MCF 10A (cell line): ENCODE measurements at regions of chr1 and their contacts with region 1.

Region 1: DNA sequence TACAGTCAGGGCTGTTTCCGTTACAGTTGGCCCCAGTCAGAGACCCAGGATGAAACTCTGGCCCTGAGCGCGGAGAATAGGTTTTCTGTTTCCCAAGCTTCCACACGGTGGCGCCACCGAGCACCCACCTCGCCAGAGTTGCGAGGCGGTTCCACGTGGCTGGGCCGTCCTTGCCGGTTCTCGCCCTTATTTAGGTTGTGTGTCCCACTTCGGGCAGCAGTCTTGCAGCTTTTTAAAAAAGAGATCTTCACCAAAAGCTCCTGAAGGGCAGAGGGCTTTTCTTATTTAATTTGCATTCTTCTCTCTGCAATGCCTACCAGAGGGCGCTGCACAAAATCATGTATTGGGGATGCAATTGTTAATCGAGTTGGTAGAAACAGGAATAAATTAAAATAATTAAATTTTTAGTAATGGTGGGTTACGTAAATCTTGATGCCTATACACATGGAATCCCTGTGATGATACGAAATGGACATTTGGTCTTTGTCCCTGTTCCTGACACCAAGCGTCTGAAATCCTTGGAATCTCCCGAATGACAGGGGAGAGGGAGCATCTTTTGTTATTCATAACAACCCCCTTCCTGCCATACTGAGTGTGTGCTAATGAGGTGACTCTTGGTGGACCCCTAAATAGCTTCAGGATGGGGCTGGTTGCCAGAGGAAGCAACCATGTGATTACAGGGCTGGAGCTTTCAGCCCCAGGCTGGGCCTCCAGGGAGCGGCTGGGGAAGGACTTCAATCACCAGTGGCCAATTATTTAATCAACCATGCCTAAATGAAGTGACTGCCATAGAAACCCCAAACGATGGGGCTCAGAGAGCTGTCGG is 5.6 kb upstream of the S100A7 start:
- DNase-seq: peak; percentile 72
- H3K4me3 Mint-ChIP-seq: no peak overlapping the region
- H3K27ac Mint-ChIP-seq: no peak overlapping the region
- H3K4me1 Mint-ChIP-seq: no peaks in the 10 kb centered on the region
- H3K27me3 Mint-ChIP-seq: peaks cover 32% of the 10 kb centered on the region
- CTCF ChIP-seq: peak; percentile 93

Region 2: DNA sequence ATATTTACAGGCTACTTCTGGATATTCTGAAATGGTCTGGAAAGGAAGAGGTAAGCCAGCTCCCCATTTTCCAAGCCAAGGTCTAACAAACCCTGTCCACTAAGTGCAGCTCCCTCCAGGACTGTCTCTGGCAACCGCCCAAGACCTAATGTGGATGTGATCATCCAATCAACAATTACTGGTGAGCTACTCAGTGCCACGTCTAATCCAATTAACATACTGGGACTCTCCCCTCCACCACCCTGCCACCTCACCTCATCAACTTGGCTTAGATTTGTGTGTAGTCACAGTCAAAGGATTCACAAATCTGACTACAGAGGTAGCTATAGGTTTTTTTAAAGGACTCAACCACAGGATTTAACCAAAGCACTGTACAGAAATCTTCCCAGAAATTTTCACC is 19.8 kb after region 1 on chr1:
- CTCF ChIA-PET with region 1: interaction called, 13 read pairs
- POLR2A ChIA-PET with region 1: interaction called, 3 read pairs
- intact Hi-C with region 1: loop called (anchors 1 kb)
- DNase-seq: peak; percentile 61
- H3K4me3 Mint-ChIP-seq: no peak overlapping the region
- H3K27ac Mint-ChIP-seq: no peak overlapping the region
- H3K4me1 Mint-ChIP-seq: peaks cover 38% of the 10 kb centered on the region
- H3K27me3 Mint-ChIP-seq: peaks cover 59% of the 10 kb centered on the region
- CTCF ChIP-seq: no peak